Left ventricle myocardium inferior (tissue), 1 donor: ENCODE measurements at regions of chr1 and their contacts with region 1.

Region 1: DNA sequence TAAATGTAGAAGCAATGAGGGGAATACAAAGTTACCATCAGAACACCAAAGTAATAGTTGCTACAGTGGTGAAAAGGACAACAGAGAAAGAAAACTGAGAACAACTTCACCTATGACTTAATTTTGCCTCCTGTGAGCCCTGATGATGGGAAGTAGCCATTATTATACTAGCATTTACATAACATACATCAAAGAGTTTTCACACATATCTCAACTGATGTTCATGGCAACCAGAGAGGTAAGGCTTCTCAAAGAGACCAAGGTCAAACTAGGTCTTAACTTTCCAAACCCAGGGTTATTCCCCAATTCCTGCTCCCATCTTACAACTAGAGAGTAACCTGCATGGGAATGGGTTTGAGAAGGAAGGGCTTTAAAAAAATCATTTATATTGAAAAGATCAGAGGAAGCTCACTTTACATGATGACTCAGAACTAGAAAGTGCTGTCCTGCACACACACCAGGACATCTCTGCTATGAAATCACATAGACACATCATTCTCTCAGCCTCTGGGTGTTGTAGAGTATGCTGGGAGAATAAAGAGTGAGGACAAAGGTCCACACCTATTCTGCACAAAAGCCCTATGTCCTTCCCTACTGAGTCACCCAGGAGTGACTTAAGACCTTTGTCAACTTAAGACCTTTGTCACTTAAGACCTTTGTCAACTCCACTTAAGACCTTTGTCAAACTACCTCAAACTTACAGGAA is 179.7 kb downstream of the TNFSF18 start:
- DNase-seq: no peak
- H3K4me3 ChIP-seq: no peak overlapping the region
- H3K27ac ChIP-seq: no peak overlapping the region
- H3K4me1 ChIP-seq: no peaks in the 10 kb centered on the region
- H3K27me3 ChIP-seq: no peaks in the 10 kb centered on the region
- CTCF ChIP-seq: no peak

Region 2: DNA sequence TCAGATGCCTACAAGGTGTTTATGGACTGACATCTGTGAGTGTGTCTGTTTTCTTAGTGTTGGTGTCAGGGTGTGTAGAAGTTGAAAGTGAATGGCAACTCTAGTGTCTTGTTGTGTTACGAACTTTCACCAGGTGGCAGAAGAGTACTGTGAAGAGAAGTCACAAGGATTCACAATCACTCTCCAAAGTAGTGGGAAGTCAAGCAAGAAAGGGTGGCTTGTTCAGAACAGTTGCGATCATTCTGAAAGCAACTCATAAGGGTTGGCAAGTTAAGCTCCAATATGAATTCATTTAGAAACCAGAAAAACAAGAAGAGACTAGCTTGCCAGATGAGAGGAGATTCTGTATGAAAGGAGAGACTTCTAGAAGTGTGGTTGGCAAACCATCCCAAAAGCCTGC is 126.0 kb before region 1 on chr1:
- intact Hi-C with region 1: no loop called
- DNase-seq: no peak
- H3K4me3 ChIP-seq: no peak overlapping the region
- H3K27ac ChIP-seq: no peak overlapping the region
- H3K4me1 ChIP-seq: peaks cover 13% of the 10 kb centered on the region
- H3K27me3 ChIP-seq: peaks cover 13% of the 10 kb centered on the region
- CTCF ChIP-seq: peak; percentile 64

Region 3: DNA sequence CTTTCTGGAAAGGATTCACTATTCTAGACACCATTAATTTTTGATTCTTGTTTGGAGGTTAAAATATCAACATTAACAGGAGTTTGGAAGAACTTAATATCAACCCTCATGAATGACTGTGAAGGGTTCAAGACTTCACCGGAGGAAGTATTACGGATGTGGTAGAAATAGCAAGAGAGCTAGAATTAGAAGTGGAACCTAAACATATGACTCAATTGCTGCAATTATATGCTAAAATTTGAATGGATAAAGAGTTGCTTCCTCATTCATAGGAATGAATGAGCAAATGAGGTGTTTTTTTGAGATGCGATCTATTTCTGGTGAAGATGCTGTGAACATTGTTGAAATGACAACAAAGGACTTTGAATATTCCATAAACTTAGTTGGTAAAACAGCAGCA is 414.0 kb after region 1 on chr1:
- intact Hi-C with region 1: loop called (anchors 5 kb)
- DNase-seq: no peak
- H3K4me3 ChIP-seq: no peak overlapping the region
- H3K27ac ChIP-seq: no peak overlapping the region
- H3K4me1 ChIP-seq: no peaks in the 10 kb centered on the region
- H3K27me3 ChIP-seq: no peaks in the 10 kb centered on the region
- CTCF ChIP-seq: no peak